Activated naive CD4-positive, alpha-beta T cell treated with anti-CD3 and anti-CD28 coated beads, Interleukin-2, amount 10 ng/mL, durations not matched to agents 7 days and 5 days (primary cell): ENCODE measurements at regions of chr10 and their contacts with region 1.

Region 1: GRCh38 chr10:48506147-48506917 is 98.5 kb downstream of the ARHGAP22 start:
- DNase-seq: peak; percentile 42
- H3K4me3 Mint-ChIP-seq: no peak overlapping the region
- H3K27ac Mint-ChIP-seq: no peak overlapping the region
- H3K4me1 Mint-ChIP-seq: no peaks in the 10 kb centered on the region
- H3K27me3 Mint-ChIP-seq: peaks cover 9% of the 10 kb centered on the region

Region 2: DNA sequence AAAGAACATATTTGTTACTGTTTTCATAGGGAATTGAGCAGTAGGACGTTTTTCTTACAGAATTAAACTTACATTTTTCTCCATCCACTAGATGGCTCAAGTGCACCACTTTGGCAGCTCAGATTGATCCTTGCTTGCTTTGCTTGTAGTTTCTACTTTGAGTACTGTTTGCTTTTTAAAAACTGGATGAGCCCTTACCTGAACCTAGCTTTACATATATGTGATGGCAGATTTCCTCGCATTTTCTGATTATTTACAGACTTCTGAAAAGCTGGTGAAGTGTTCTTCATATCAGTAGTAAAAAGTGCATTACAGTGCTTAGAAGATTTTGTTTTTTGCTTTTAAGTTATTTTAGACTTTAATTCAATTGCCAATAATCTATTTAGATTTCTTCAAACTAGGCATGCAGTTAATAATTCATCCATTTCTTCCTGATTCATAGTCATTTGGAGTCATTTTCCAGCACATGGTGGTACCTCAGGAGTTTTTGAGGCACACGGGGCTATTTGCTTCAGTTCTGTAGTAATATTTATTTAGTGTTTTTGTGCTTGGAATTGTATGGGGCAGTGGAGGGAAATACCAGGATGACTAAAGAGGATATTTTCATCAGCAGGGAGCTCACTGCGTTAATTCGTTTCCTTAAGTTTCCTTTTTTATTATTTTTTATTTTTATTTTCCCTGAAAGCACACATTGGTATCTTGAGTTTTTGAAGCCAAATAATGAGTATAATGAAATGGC is 142.5 kb before region 1 on chr10:
- CTCF ChIA-PET with region 1: interaction called, 30 read pairs
- DNase-seq: peak; percentile 42
- H3K4me3 Mint-ChIP-seq: no peak overlapping the region
- H3K27ac Mint-ChIP-seq: no peak overlapping the region
- H3K4me1 Mint-ChIP-seq: peaks cover 2% of the 10 kb centered on the region
- H3K27me3 Mint-ChIP-seq: no peaks in the 10 kb centered on the region

Region 3: GRCh38 chr10:48450741-48451466 is 55.4 kb before region 1 on chr10:
- CTCF ChIA-PET with region 1: no interaction called
- DNase-seq: no peak
- H3K4me3 Mint-ChIP-seq: no peak overlapping the region
- H3K27ac Mint-ChIP-seq: no peak overlapping the region
- H3K4me1 Mint-ChIP-seq: no peaks in the 10 kb centered on the region
- H3K27me3 Mint-ChIP-seq: peaks cover 3% of the 10 kb centered on the region